Lower leg skin (tissue), 4 donors: ENCODE measurements at regions of chr10 and their contacts with region 1.

Region 1: GRCh38 chr10:69392481-69393000 is 24.2 kb downstream of the TACR2 start:
- DNase-seq: peak; percentile 90 to 97
- H3K4me3 ChIP-seq: no peak overlapping the region
- CTCF ChIP-seq: peak in 1 of 3 donors; percentile 94
- POLR2A ChIP-seq: no peak

Region 2: GRCh38 chr10:69237528-69238159 is 154.9 kb before region 1 on chr10:
- intact Hi-C with region 1: loop called (anchors 5 kb)
- DNase-seq: peak; percentile 82 to 98
- H3K4me3 ChIP-seq: no peak overlapping the region
- CTCF ChIP-seq: peak in 1 of 3 donors; percentile 85
- POLR2A ChIP-seq: no peak

Region 3: DNA sequence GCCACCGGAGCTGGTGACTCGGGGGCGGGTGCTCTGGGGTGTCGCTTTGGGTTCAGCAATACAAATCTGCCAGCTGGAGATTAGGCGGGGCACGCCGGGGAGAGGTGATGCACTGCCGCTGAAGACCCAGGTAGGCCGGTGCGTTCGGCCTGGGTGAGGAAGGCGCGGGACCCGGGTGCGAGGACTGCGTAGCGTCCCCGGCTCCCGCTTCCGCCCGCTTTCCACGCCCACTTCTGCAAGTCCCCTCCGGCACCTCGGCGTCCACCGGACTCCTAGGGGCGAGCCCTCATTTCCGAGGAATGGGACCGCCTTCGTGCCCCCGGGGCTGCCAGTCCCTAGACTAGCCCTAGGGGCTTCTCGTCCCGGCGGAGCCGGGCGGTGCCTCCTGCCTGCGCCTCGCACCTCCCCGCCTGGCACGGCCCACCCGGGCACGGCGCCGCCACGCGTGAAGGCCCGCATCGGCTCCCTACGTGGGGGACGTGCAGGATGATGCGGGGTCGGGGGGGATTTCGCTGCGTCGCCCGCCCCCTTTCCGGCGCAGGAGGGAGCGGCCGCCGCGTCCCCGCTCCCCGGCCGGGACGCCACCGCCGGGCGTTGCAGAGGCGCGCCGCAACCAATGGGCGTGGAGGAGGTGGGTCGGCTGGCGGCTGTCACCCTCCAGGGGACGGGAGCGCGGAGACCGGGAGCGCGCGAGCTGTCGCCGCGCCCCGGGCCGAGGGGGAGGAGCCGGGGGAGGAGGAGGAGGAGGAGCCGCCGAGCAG is 74.3 kb before region 1 on chr10:
- intact Hi-C with region 1: loop called (anchors 2 kb)
- DNase-seq: peak; percentile 86 to 98
- H3K4me3 ChIP-seq: peak overlapping the region; percentile 98
- CTCF ChIP-seq: no peak
- POLR2A ChIP-seq: peak in 1 of 2 donors; percentile 7